ENCODE measurements at regions of chr14 and their contacts with region 1.

Region 1: DNA sequence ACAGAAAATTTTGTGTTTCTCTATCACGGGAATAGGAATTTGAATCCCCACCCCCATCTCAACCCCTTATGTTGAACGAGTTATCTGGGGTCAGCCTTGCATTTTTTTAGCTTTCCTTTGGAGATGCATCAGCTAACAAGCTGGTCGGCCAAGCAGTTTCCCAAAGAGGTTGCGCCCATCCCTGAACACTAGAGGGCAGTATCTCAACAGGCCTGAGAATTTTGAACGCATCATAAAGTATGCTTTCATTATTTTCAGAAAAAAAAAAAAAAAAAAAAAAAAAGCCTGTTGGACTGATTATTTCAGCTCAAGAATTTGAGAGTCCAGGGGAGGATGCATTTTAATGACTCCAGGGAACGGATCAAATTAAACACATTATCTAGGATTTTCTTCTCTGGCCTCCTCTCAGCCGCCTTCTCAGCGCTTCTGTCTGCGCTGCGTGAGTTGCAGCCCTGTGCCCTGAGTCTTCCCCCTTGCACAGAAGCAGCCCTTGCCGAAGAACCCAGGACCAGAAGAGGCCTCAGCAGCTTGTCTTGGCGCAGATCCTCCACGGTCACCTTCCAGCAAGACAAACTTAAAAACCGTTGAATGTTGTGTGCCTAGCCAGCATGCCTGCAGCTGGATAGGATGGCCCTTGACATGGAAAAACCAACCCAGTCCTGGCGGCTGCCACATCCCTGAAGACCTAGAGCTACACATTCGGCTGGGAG is 76.6 kb upstream of the GZMB start:
- DNase-seq: no peak
- ATAC-seq: peak; percentile 50
- H3K4me3 ChIP-seq: no peak overlapping the region
- H3K27ac ChIP-seq: no peak overlapping the region
- H3K4me1 ChIP-seq: peaks cover 15% of the 10 kb centered on the region
- H3K27me3 ChIP-seq: no peaks in the 10 kb centered on the region
- CTCF ChIP-seq: peak; percentile 81 to 89 (median 82)
- EP300 ChIP-seq: no peak
- POLR2A ChIP-seq: no peak
- RAD21 ChIP-seq: peak; percentile 80

Region 2: GRCh38 chr14:24605435-24606190 is 104.9 kb before region 1 on chr14:
- CTCF ChIA-PET with region 1: interaction called, 12 read pairs
- POLR2A ChIA-PET with region 1: no interaction called
- RAD21 ChIA-PET with region 1: interaction called, 8 read pairs
- SMC1A ChIA-PET with region 1: interaction called, 6 read pairs
- in situ Hi-C with region 1: no loop called
- intact Hi-C with region 1: no loop called
- DNase-seq: no peak
- ATAC-seq: peak; percentile 98
- H3K4me3 ChIP-seq: no peak overlapping the region
- H3K27ac ChIP-seq: no peak overlapping the region
- H3K4me1 ChIP-seq: peaks cover 8% of the 10 kb centered on the region
- H3K27me3 ChIP-seq: no peaks in the 10 kb centered on the region
- CTCF ChIP-seq: peak; percentile 73 to 98 (median 97)
- EP300 ChIP-seq: no peak
- POLR2A ChIP-seq: no peak
- RAD21 ChIP-seq: peak; percentile 93

Region 3: DNA sequence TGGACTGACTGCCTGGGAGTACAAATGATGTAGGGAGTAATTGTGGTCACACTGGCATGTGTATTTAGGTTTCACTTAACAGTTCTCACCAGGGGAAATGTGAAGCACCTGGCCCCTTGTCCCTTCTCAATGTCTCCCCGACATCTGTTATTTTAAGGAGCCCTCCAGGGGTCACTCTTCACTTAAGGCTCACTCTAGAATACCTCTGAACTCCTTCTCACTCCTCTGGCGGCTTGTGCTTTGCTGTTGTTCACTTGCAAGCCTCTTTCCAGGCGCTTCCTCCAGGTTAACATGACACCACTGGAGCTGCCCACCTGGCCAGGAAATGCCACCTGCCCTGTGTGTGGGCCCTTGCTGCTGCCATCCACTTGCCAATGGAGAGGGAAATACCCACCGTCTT is 20.1 kb before region 1 on chr14:
- CTCF ChIA-PET with region 1: interaction called, 57 read pairs
- POLR2A ChIA-PET with region 1: interaction called, 14 read pairs
- RAD21 ChIA-PET with region 1: interaction called, 73 read pairs
- SMC1A ChIA-PET with region 1: interaction called, 60 read pairs
- in situ Hi-C with region 1: no loop called
- intact Hi-C with region 1: no loop called
- DNase-seq: no peak
- ATAC-seq: peak; percentile 67
- H3K4me3 ChIP-seq: no peak overlapping the region
- H3K27ac ChIP-seq: no peak overlapping the region
- H3K4me1 ChIP-seq: peaks cover 18% of the 10 kb centered on the region
- H3K27me3 ChIP-seq: no peaks in the 10 kb centered on the region
- CTCF ChIP-seq: peak; percentile 30 to 37 (median 36); a peak in 5 of 6 replicates
- EP300 ChIP-seq: no peak
- POLR2A ChIP-seq: no peak
- RAD21 ChIP-seq: peak; percentile 58

Region 4: GRCh38 chr14:24734878-24735500 is 24.4 kb after region 1 on chr14:
- CTCF ChIA-PET with region 1: interaction called, 140 read pairs
- POLR2A ChIA-PET with region 1: no interaction called
- RAD21 ChIA-PET with region 1: interaction called, 58 read pairs
- SMC1A ChIA-PET with region 1: interaction called, 82 read pairs
- in situ Hi-C with region 1: no loop called
- intact Hi-C with region 1: loop called (anchors 2 kb)
- DNase-seq: no peak
- ATAC-seq: peak; percentile 93
- H3K4me3 ChIP-seq: no peak overlapping the region
- H3K27ac ChIP-seq: no peak overlapping the region
- H3K4me1 ChIP-seq: no peaks in the 10 kb centered on the region
- H3K27me3 ChIP-seq: no peaks in the 10 kb centered on the region
- CTCF ChIP-seq: peak; percentile 58 to 68 (median 67)
- EP300 ChIP-seq: no peak
- POLR2A ChIP-seq: no peak
- RAD21 ChIP-seq: peak; percentile 53

Region 5: GRCh38 chr14:25042362-25043299 is 332.1 kb after region 1 on chr14:
- CTCF ChIA-PET with region 1: interaction called, 23 read pairs
- POLR2A ChIA-PET with region 1: no interaction called
- RAD21 ChIA-PET with region 1: interaction called, 6 read pairs
- SMC1A ChIA-PET with region 1: interaction called, 3 read pairs
- in situ Hi-C with region 1: no loop called
- intact Hi-C with region 1: no loop called
- DNase-seq: no peak
- ATAC-seq: no peak
- H3K4me3 ChIP-seq: no peak overlapping the region
- H3K27ac ChIP-seq: no peak overlapping the region
- H3K4me1 ChIP-seq: no peaks in the 10 kb centered on the region
- H3K27me3 ChIP-seq: no peaks in the 10 kb centered on the region
- CTCF ChIP-seq: 0 out of 6 replicates have a peak, but pooled peaks of 1 of the 3 experiments have one; percentile 8
- EP300 ChIP-seq: no peak
- POLR2A ChIP-seq: no peak
- RAD21 ChIP-seq: no peak

Region 6: GRCh38 chr14:25237845-25238244 is 527.3 kb after region 1 on chr14:
- CTCF ChIA-PET with region 1: interaction called, 15 read pairs
- POLR2A ChIA-PET with region 1: no interaction called
- RAD21 ChIA-PET with region 1: interaction called, 6 read pairs
- SMC1A ChIA-PET with region 1: interaction called, 3 read pairs
- in situ Hi-C with region 1: no loop called
- intact Hi-C with region 1: no loop called
- DNase-seq: no peak
- ATAC-seq: peak; percentile 66; the same call in 2 of the 3 replicates
- H3K4me3 ChIP-seq: no peak overlapping the region
- H3K27ac ChIP-seq: no peak overlapping the region
- H3K4me1 ChIP-seq: no peaks in the 10 kb centered on the region
- H3K27me3 ChIP-seq: no peaks in the 10 kb centered on the region
- CTCF ChIP-seq: peak in 1 of 3 experiments; percentile 7; a peak in 1 of 6 replicates
- EP300 ChIP-seq: no peak
- POLR2A ChIP-seq: no peak
- RAD21 ChIP-seq: no peak